Cardiac septum (tissue), 1 donor: ENCODE measurements at regions of chr6 and their contacts with region 1.

Region 1: GRCh38 chr6:20291764-20292580 is 79.7 kb upstream of the MBOAT1 start:
- DNase-seq: peak; percentile 79

Region 2: GRCh38 chr6:20092071-20092566 is 199.9 kb before region 1 on chr6:
- intact Hi-C with region 1: loop called (anchors 10 kb)
- DNase-seq: no peak

Region 3: DNA sequence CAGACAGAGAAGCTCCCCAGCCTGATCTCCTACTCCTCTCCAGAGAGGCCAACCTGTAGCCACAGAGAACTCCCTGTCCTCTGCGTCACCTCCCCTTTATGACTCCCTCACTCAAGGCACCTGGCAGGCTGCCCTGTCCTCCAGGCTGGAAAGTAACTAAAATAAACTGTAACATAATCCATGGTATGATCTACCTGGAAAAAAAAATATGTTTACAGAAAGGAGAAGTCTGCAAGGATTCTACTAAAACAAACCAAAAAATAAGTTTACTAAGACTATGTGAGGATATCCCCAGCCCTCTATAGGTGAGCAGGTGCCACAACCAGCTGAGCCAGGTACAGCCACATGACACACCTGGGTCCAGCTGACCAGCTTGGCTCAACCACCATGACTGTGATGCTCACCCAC is 108.9 kb before region 1 on chr6:
- intact Hi-C with region 1: no loop called
- DNase-seq: no peak

Region 4: DNA sequence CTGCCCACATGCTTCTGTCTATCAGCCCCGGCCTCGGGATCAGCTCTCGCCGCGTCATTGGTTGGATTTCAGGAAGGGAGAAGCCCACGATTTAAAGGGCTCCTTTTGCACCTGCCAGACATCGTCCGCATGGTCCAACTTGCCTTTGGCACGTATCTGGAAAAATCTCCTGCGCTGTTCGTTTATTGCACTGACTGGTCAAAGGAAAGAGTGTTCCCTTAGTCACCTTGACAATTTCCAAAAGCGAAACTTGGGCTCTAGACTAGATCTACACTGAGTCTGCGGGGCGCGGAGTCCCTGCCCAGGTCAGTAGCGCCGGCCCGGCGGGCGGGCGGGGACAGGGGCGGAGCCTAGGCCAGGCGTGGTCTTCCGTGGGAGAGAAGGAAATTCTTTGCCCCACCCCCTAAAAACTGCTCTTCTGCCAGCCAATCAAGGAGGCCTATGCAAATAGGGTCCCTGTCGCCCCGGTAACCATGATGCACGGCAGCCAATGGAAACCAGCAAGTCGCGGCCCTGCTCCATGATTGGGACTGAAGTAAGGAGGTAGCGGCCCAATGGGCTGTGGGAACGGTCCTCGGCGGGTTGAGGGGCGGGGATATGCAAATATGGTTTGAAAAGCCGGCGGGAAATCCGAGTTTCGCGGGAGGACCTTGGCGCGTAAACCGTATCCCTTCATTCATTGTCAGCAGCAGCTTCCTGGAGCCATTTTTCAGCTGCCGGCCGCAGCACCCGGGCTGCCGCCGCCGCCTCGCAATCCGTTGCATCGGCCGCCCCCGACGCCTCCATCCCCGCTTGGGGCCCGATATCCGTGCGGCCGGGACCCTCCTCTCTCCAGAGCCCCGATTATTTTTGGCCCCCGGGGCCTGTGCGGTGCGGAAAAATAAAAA is 109.5 kb after region 1 on chr6 and contains the start of gene E2F3:
- intact Hi-C with region 1: loop called (anchors 5 kb)
- DNase-seq: peak; percentile 100
- total RNA-seq, gene E2F3: 8.6 TPM